ENCODE measurements at regions of chr6 and their contacts with region 1.

Region 1: GRCh38 chr6:97059473-97059872 is 134.9 kb downstream of the KLHL32 start:
- DNase-seq: peak; percentile 17
- ATAC-seq: peak; percentile 92
- H3K4me3 ChIP-seq: no peak overlapping the region
- H3K27ac ChIP-seq: no peak overlapping the region
- H3K4me1 ChIP-seq: no peaks in the 10 kb centered on the region
- H3K27me3 ChIP-seq: no peaks in the 10 kb centered on the region; a peak in 1 of 4 replicates
- CTCF ChIP-seq: peak; percentile 41 to 63 (median 50); a peak in 5 of 6 replicates
- EP300 ChIP-seq: no peak
- POLR2A ChIP-seq: no peak
- RAD21 ChIP-seq: peak; percentile 80

Region 2: GRCh38 chr6:95431637-95432228 is 1627.7 kb before region 1 on chr6:
- CTCF ChIA-PET with region 1: no interaction called
- POLR2A ChIA-PET with region 1: no interaction called
- RAD21 ChIA-PET with region 1: no interaction called
- SMC1A ChIA-PET with region 1: no interaction called
- in situ Hi-C with region 1: loop called (anchors 25 kb)
- intact Hi-C with region 1: loop called (anchors 10 kb)
- DNase-seq: no peak
- ATAC-seq: peak; percentile 50
- H3K4me3 ChIP-seq: no peak overlapping the region
- H3K27ac ChIP-seq: no peak overlapping the region
- H3K4me1 ChIP-seq: no peaks in the 10 kb centered on the region
- H3K27me3 ChIP-seq: no peaks in the 10 kb centered on the region
- CTCF ChIP-seq: peak; percentile 38 to 57 (median 48)
- EP300 ChIP-seq: no peak
- POLR2A ChIP-seq: no peak
- RAD21 ChIP-seq: peak; percentile 72

Region 3: GRCh38 chr6:96521644-96522464 is 537.6 kb before region 1 on chr6 and contains the start of gene UFL1:
- CTCF ChIA-PET with region 1: interaction called, 8 read pairs
- POLR2A ChIA-PET with region 1: no interaction called
- RAD21 ChIA-PET with region 1: no interaction called
- SMC1A ChIA-PET with region 1: no interaction called
- in situ Hi-C with region 1: loop called (anchors 10 kb)
- intact Hi-C with region 1: no loop called
- DNase-seq: peak; percentile 68
- ATAC-seq: peak; percentile 94
- H3K4me3 ChIP-seq: peak within 1 kb of the TSS; percentile 91
- H3K27ac ChIP-seq: peak within 1 kb of the TSS; percentile 96
- H3K4me1 ChIP-seq: no peaks in the 10 kb centered on the region
- H3K27me3 ChIP-seq: no peaks in the 10 kb centered on the region
- CTCF ChIP-seq: no peak
- EP300 ChIP-seq: 0 out of 4 replicates have a peak, but pooled peaks of 1 of the 2 experiments have one; percentile 39
- POLR2A ChIP-seq: peak; percentile 100
- RAD21 ChIP-seq: no peak
- polyA plus RNA-seq, gene UFL1: 24.5 to 29.1 TPM

Region 4: GRCh38 chr6:96721227-96721626 is 338.2 kb before region 1 on chr6:
- CTCF ChIA-PET with region 1: no interaction called
- POLR2A ChIA-PET with region 1: no interaction called
- RAD21 ChIA-PET with region 1: no interaction called
- SMC1A ChIA-PET with region 1: no interaction called
- in situ Hi-C with region 1: no loop called
- intact Hi-C with region 1: loop called (anchors 10 kb)
- DNase-seq: no peak
- ATAC-seq: no peak
- H3K4me3 ChIP-seq: no peak overlapping the region
- H3K27ac ChIP-seq: no peak overlapping the region
- H3K4me1 ChIP-seq: no peaks in the 10 kb centered on the region
- H3K27me3 ChIP-seq: no peaks in the 10 kb centered on the region; a peak in 1 of 4 replicates
- CTCF ChIP-seq: no peak
- EP300 ChIP-seq: no peak
- POLR2A ChIP-seq: no peak
- RAD21 ChIP-seq: no peak

Region 5: GRCh38 chr6:96907498-96907897 is 152.0 kb before region 1 on chr6:
- CTCF ChIA-PET with region 1: interaction called, 29 read pairs
- POLR2A ChIA-PET with region 1: no interaction called
- RAD21 ChIA-PET with region 1: interaction called, 4 read pairs
- SMC1A ChIA-PET with region 1: interaction called, 29 read pairs
- in situ Hi-C with region 1: no loop called
- intact Hi-C with region 1: no loop called
- DNase-seq: peak; percentile 44
- ATAC-seq: peak; percentile 97
- H3K4me3 ChIP-seq: no peak overlapping the region
- H3K27ac ChIP-seq: no peak overlapping the region
- H3K4me1 ChIP-seq: no peaks in the 10 kb centered on the region
- H3K27me3 ChIP-seq: peaks cover 0 to 1% of the 10 kb centered on the region in 2 experiments; a peak in 1 of 4 replicates
- CTCF ChIP-seq: no peak
- EP300 ChIP-seq: no peak
- POLR2A ChIP-seq: no peak
- RAD21 ChIP-seq: no peak

Region 6: DNA sequence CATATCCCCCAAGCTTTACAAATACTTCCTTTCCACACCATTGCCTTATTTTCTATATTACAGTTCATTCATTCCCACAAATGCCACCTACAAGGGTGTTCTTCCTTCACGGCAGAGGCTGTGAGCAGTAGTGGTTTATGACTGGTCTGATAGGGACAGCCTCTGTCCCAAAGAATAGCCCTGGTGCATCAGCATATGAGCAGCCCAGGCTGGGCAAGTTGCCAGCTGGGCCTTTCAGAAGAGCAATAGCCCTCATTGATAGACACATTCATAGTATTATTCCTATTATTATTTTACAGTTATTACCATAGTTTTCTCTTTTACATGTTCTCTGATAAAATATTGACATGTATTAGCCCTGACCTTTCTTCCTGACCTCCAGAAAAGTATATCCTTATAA is 73.6 kb after region 1 on chr6:
- CTCF ChIA-PET with region 1: no interaction called
- POLR2A ChIA-PET with region 1: no interaction called
- RAD21 ChIA-PET with region 1: no interaction called
- SMC1A ChIA-PET with region 1: no interaction called
- in situ Hi-C with region 1: no loop called
- intact Hi-C with region 1: no loop called
- DNase-seq: no peak
- ATAC-seq: no peak
- H3K4me3 ChIP-seq: no peak overlapping the region
- H3K27ac ChIP-seq: no peak overlapping the region
- H3K4me1 ChIP-seq: no peaks in the 10 kb centered on the region
- H3K27me3 ChIP-seq: no peaks in the 10 kb centered on the region
- CTCF ChIP-seq: no peak
- EP300 ChIP-seq: no peak
- POLR2A ChIP-seq: no peak
- RAD21 ChIP-seq: no peak